IMR-90 (cell line): ENCODE measurements at regions of chr9 and their contacts with region 1.

Region 1: GRCh38 chr9:94855903-94856302 is 129.4 kb downstream of the AOPEP start:
- DNase-seq: no peak
- ATAC-seq: no peak
- H3K4me3 ChIP-seq: no peak overlapping the region
- H3K27ac ChIP-seq: no peak overlapping the region
- H3K4me1 ChIP-seq: peaks cover 9% of the 10 kb centered on the region
- H3K27me3 ChIP-seq: no peaks in the 10 kb centered on the region
- CTCF ChIP-seq: no peak
- POLR2A ChIP-seq: no peak
- RAD21 ChIP-seq: no peak

Region 2: GRCh38 chr9:94821098-94821887 is 34.6 kb before region 1 on chr9:
- CTCF ChIA-PET with region 1: no interaction called
- POLR2A ChIA-PET with region 1: no interaction called
- dilution Hi-C with region 1: no loop called
- in situ Hi-C with region 1: no loop called
- intact Hi-C with region 1: loop called (anchors 5 kb)
- DNase-seq: no peak
- ATAC-seq: no peak
- H3K4me3 ChIP-seq: no peak overlapping the region
- H3K27ac ChIP-seq: no peak overlapping the region
- H3K4me1 ChIP-seq: peaks cover 14% of the 10 kb centered on the region
- H3K27me3 ChIP-seq: no peaks in the 10 kb centered on the region
- CTCF ChIP-seq: no peak
- POLR2A ChIP-seq: no peak
- RAD21 ChIP-seq: no peak

Region 3: DNA sequence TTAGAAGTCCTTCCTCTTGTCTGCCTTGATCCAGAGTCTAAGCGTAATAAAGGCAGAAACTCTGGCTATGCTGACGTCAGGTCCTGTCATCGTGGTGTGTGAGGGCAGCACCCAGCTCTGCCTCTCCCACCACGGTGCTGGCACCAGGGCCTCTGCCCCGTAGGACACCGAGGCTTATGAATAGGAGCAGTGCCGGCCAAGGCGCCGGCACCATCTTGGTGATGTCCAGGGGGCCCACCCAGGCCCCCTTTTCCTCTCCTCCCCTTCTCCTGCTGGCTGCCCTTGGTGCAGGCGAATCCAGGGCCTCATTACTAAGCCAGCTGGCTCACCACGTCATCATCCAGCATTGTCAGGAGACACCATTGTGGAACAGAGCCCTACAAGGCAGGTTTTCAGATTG is 209.3 kb after region 1 on chr9:
- CTCF ChIA-PET with region 1: no interaction called
- POLR2A ChIA-PET with region 1: no interaction called
- dilution Hi-C with region 1: no loop called
- in situ Hi-C with region 1: no loop called
- intact Hi-C with region 1: no loop called
- DNase-seq: no peak
- ATAC-seq: no peak; the same call in 1 of the 2 replicates
- H3K4me3 ChIP-seq: no peak overlapping the region
- H3K27ac ChIP-seq: no peak overlapping the region
- H3K4me1 ChIP-seq: peaks cover 22% of the 10 kb centered on the region
- H3K27me3 ChIP-seq: no peaks in the 10 kb centered on the region
- CTCF ChIP-seq: no peak
- POLR2A ChIP-seq: no peak
- RAD21 ChIP-seq: no peak